MCF 10A (cell line): ENCODE measurements at regions of chr18 and their contacts with region 1.

Region 1: GRCh38 chr18:3652380-3653262 is 202.6 kb downstream of the TGIF1 start:
- DNase-seq: peak; percentile 99
- H3K4me3 Mint-ChIP-seq: peak overlapping the region; percentile 4
- H3K27ac Mint-ChIP-seq: peak overlapping the region; percentile 91
- H3K4me1 Mint-ChIP-seq: peaks cover 41% of the 10 kb centered on the region
- H3K27me3 Mint-ChIP-seq: no peaks in the 10 kb centered on the region
- CTCF ChIP-seq: peak; percentile 13

Region 2: DNA sequence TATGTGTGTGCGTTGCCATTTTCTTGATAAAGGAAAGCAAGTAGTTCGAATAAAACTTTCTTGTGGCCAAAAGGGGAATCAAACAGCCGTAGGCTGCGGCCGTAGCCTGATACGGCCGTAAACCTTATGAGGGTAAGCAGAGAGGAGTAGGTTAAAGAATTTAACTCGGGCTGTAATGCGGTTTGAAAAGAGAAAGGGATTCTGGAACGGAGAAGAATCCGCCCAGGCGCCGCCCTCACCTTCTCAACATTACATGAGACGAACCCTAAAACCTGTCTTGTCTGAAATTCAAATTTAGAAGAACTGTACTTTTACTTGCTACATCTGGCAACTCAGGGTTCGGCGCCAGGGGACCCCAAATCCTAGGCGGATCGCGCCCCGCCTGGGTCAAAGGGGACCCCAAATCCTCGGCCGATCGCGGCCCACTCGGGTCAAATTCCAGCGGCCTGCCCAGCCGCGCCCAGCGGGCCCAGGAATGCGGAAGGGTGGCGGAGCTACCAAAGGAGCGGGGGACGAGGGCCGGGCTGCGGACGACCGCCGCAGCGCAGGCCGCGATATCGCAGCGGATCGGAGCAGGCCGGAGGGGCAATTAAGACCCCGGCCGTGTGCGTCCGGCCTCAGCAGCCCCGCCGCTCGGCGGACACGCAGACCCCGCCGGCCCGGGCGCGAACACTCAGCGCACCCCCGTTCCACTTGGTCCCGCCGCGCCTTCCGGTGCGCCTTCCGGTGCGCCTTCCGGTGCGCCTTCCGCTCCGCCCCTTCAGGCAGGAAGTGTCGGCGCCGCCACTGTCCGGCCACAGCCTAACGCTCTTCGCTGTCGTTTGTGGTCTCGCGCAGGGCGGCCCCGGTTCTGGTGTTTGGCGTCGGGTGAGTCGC is 391.0 kb before region 1 on chr18 and contains the start of gene MYL12B:
- CTCF ChIA-PET with region 1: no interaction called
- POLR2A ChIA-PET with region 1: interaction called, 13 read pairs
- intact Hi-C with region 1: no loop called
- DNase-seq: peak; percentile 78
- H3K4me3 Mint-ChIP-seq: peak within 1 kb of the TSS; percentile 80
- H3K27ac Mint-ChIP-seq: peak within 1 kb of the TSS; percentile 82
- H3K4me1 Mint-ChIP-seq: peaks cover 43% of the 10 kb centered on the region
- H3K27me3 Mint-ChIP-seq: no peaks in the 10 kb centered on the region
- CTCF ChIP-seq: no peak
- total RNA-seq, gene MYL12B: 175 and 229 TPM in 2 replicates

Region 3: GRCh38 chr18:3794537-3795348 is 142.1 kb after region 1 on chr18:
- CTCF ChIA-PET with region 1: no interaction called
- POLR2A ChIA-PET with region 1: no interaction called
- intact Hi-C with region 1: no loop called
- DNase-seq: peak; percentile 90
- H3K4me3 Mint-ChIP-seq: peak overlapping the region; percentile 32
- H3K27ac Mint-ChIP-seq: peak overlapping the region; percentile 73
- H3K4me1 Mint-ChIP-seq: peaks cover 22% of the 10 kb centered on the region
- H3K27me3 Mint-ChIP-seq: no peaks in the 10 kb centered on the region
- CTCF ChIP-seq: no peak